Right ventricle myocardium inferior (tissue), 1 donor: ENCODE measurements at regions of chr3 and their contacts with region 1.

Region 1: DNA sequence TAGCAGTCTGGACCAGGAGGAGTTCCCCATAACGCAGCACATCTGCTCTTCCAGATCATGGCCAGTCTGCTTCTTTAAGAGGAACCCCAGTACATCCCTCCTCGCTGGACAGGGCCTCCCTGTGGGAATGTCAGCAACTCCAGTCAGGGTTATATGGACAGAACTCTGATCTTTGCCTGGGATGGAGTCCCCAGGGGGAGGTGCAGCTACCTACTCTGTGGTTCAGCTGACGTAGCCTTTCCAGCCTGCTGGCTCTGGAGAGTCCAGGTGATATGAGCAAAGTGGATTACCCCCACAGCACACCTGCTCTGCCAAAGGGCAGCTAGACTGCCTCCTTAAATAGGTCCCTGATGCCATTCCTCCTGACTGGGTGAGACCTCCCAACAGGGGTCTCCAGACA is 417.1 kb upstream of the EPHA3 start:
- DNase-seq: no peak
- ATAC-seq: no peak

Region 2: DNA sequence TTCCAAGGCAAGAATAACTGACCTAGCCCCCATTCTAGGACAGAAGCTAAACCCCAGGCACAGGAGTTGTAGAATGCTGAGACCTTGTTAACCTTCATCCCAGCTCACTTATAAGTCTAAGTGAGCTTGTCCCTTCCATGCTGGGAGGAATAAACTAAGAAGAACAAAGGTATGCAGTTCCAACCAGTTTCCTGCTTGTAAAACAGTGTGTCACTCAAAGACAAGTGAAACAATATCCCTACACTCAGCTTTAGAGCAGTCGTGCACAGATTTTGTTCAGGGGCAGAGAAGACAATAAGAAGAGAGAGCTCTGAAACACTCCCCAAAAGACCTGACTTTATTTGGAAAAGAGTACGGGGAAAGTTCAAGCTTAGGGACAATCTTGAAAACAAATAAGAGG is 923.6 kb before region 1 on chr3:
- intact Hi-C with region 1: loop called (anchors 10 kb)
- DNase-seq: no peak
- ATAC-seq: no peak

Region 3: DNA sequence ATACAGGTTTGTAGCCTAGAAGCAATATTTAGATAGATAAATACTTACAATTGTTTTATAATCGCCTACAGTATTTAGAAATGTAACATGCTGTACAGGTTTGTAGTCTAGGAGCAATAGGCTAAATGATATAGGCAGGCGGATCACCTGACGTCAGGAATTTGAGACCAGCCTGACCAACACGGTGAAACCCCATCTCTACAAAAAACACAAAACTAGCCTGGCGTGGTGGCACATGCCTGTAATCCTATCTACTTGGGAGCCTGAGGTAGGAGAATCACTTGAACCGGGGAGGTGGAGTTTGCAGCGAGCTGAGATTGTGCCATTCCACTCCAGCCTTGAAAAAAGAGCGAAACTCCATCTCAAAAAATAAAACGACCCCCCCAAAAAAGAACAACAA is 41.9 kb after region 1 on chr3:
- intact Hi-C with region 1: no loop called
- DNase-seq: no peak
- ATAC-seq: no peak